ENCODE measurements at regions of chr12 and their contacts with region 1.

Region 1: GRCh38 chr12:6965026-6965661 is 5.3 kb downstream of the PHB2 start:
- DNase-seq: no peak
- ATAC-seq: peak; percentile 66
- H3K4me3 ChIP-seq: no peak overlapping the region
- H3K27ac ChIP-seq: peak overlapping the region; percentile 64
- H3K4me1 ChIP-seq: peaks cover 38% of the 10 kb centered on the region
- H3K27me3 ChIP-seq: no peaks in the 10 kb centered on the region
- CTCF ChIP-seq: peak; percentile 86 to 99 (median 96)
- EP300 ChIP-seq: 0 out of 4 replicates have a peak, but pooled peaks of 1 of the 2 experiments have one; percentile 11
- POLR2A ChIP-seq: peak; percentile 44; the same call in 1 of the 2 replicates
- RAD21 ChIP-seq: peak; percentile 88

Region 2: DNA sequence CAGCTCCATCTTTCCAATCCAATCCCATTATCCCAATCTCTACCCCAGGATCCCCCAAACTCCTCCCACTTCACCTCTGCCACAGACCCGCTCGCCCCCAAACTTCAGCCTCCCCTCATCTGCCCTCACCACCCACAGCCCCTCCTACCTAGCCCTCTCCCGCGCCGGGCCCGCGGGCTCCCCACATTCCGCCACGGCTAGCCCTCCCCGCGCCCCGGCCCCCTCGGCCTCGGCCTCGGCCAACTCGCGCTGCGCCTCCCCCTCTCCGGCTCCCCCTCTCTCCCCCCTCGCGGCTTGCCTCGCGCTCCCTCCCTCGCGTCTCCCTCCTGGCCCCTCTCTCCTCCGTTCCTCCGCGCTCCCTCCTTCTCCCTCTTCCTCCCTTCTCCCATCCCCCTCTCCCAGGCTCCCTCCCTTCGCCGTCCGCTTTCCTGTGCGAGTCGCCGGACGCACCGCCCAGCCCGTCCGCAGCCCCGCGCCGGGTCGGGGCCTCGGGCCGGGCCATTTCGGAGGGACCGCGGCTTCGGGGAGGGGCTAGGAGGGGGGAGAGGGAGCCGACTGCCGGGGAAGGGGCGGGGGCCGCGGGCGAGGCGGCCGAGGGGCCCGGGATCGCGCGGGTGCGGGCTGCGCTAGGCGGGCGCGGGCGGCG is 37.6 kb before region 1 on chr12 and contains the start of gene ATN1:
- CTCF ChIA-PET with region 1: interaction called, 21 read pairs
- POLR2A ChIA-PET with region 1: interaction called, 16 read pairs
- RAD21 ChIA-PET with region 1: interaction called, 19 read pairs
- SMC1A ChIA-PET with region 1: interaction called, 6 read pairs
- in situ Hi-C with region 1: no loop called
- intact Hi-C with region 1: no loop called
- DNase-seq: no peak
- ATAC-seq: peak; percentile 43
- H3K4me3 ChIP-seq: peak within 1 kb of the TSS; percentile 95
- H3K27ac ChIP-seq: peak within 1 kb of the TSS; percentile 86
- H3K4me1 ChIP-seq: peaks cover 37% of the 10 kb centered on the region
- H3K27me3 ChIP-seq: no peaks in the 10 kb centered on the region
- CTCF ChIP-seq: no peak
- EP300 ChIP-seq: no peak
- POLR2A ChIP-seq: peak; percentile 79
- RAD21 ChIP-seq: no peak
- polyA plus RNA-seq, gene ATN1: 0.08 to 0.15 TPM

Region 3: DNA sequence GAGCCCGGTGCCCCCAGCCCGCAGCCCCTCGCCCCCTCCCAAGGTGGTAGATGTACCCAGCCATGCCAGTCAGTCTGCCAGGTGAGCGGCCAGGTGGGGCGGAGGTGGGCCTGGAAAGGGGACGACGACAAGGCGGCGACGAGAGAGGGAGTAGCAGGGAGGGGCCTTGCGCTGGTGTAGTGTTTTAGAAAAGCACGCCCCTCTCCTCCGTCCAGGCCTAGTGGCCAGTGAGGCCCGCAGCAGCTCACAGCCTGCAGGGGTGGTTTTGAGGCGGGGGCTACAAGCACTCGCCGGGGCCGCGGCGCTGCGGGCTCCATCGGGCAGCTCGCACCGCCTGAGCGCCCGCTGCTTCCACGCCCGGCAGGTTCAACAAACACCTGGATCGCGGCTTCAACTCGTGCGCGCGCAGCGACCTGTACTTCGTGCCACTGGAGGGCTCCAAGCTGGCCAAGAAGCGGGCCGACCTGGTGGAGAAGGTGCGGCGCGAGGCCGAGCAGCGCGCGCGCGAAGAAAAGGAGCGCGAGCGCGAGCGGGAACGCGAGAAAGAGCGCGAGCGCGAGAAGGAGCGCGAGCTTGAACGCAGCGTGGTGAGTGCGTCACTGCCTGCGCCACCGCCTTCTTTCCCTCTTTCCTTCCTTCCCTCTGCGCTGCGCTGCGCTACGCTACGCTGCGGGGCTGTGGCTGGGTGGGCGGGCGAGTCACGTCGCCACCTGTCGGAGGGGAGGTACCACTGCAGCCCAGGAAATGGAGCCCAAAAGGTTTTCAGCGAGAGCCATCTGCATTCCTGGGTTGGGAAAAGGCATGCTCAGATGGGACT is 27.5 kb before region 1 on chr12:
- CTCF ChIA-PET with region 1: interaction called, 645 read pairs
- POLR2A ChIA-PET with region 1: interaction called, 524 read pairs
- RAD21 ChIA-PET with region 1: interaction called, 3 read pairs
- SMC1A ChIA-PET with region 1: interaction called, 395 read pairs
- in situ Hi-C with region 1: no loop called
- intact Hi-C with region 1: no loop called
- DNase-seq: peak; percentile 90
- ATAC-seq: peak; percentile 96
- H3K4me3 ChIP-seq: peak overlapping the region; percentile 86
- H3K27ac ChIP-seq: peak overlapping the region; percentile 92
- H3K4me1 ChIP-seq: peaks cover 11% of the 10 kb centered on the region; the same call in 1 of the 2 replicates
- H3K27me3 ChIP-seq: no peaks in the 10 kb centered on the region
- CTCF ChIP-seq: peak; percentile 96 to 99 (median 97)
- EP300 ChIP-seq: no peak
- POLR2A ChIP-seq: peak; percentile 87
- RAD21 ChIP-seq: peak; percentile 35

Region 4: GRCh38 chr12:6953442-6954315 is 11.5 kb before region 1 on chr12:
- CTCF ChIA-PET with region 1: interaction called, 645 read pairs
- POLR2A ChIA-PET with region 1: interaction called, 524 read pairs
- RAD21 ChIA-PET with region 1: interaction called, 426 read pairs
- SMC1A ChIA-PET with region 1: interaction called, 395 read pairs
- in situ Hi-C with region 1: no loop called
- intact Hi-C with region 1: loop called (anchors 1 kb)
- DNase-seq: peak; percentile 95
- ATAC-seq: peak; percentile 51
- H3K4me3 ChIP-seq: peak overlapping the region; percentile 95
- H3K27ac ChIP-seq: peak overlapping the region; percentile 99
- H3K4me1 ChIP-seq: peaks cover 76% of the 10 kb centered on the region
- H3K27me3 ChIP-seq: no peaks in the 10 kb centered on the region
- CTCF ChIP-seq: no peak
- EP300 ChIP-seq: peak; percentile 82 to 91
- POLR2A ChIP-seq: no peak
- RAD21 ChIP-seq: no peak

Region 5: DNA sequence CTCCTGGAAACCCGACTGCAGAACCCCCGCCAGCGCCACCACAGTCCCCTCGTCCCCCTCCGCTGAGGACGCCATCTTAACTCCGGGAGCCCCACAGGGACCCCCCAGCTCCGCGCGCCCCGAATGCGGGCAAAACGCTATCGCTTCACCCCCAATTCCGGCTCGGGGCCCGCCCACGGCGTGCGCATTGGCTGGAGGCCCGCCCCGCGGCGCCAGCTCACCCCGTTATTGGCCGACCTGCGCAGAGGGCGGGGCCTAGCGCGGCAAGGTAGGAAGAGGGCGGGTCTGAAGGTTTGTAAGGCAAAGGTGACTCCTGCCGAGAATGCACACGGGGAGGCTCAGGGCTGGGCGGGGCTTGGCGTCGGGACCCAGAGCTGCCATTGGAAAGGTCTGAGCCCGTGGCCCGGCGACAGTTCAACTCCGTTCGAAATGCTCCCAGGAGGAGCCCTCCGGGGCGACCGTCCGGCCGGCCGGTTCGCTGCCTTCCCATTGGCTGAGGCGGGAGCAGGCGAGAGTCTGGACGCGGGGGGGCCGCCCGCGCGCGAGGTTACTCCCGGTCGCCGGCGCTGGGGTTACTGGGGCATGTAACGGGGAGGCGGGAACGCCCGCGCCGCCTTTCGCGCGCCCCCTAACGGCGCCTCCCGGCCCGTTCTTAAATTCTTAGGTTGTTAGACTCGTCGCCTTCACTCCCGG is 53.4 kb after region 1 on chr12 and contains the start of gene LPCAT3:
- CTCF ChIA-PET with region 1: interaction called, 8 read pairs
- POLR2A ChIA-PET with region 1: interaction called, 3 read pairs
- RAD21 ChIA-PET with region 1: interaction called, 5 read pairs
- SMC1A ChIA-PET with region 1: interaction called, 5 read pairs
- in situ Hi-C with region 1: no loop called
- intact Hi-C with region 1: loop called (anchors 5 kb)
- DNase-seq: peak; percentile 83
- ATAC-seq: peak; percentile 97
- H3K4me3 ChIP-seq: peak within 1 kb of the TSS; percentile 91
- H3K27ac ChIP-seq: peak within 1 kb of the TSS; percentile 75
- H3K4me1 ChIP-seq: no peaks in the 10 kb centered on the region
- H3K27me3 ChIP-seq: no peaks in the 10 kb centered on the region
- CTCF ChIP-seq: peak; percentile 82 to 90 (median 83); a peak in 5 of 6 replicates
- EP300 ChIP-seq: no peak
- POLR2A ChIP-seq: peak; percentile 86
- RAD21 ChIP-seq: peak; percentile 41
- polyA plus RNA-seq, gene LPCAT3: 2.6 to 3.7 TPM

Region 6: GRCh38 chr12:7092229-7092985 is 127.3 kb after region 1 on chr12 and contains the start of gene C1R:
- CTCF ChIA-PET with region 1: interaction called, 4 read pairs
- POLR2A ChIA-PET with region 1: no interaction called
- RAD21 ChIA-PET with region 1: no interaction called
- SMC1A ChIA-PET with region 1: interaction called, 4 read pairs
- in situ Hi-C with region 1: no loop called
- intact Hi-C with region 1: loop called (anchors 5 kb)
- DNase-seq: no peak
- ATAC-seq: peak; percentile 90
- H3K4me3 ChIP-seq: peak within 1 kb of the TSS; percentile 72; the same call in 1 of the 2 replicates
- H3K27ac ChIP-seq: no peak within 1 kb of the TSS; the same call in 1 of the 2 replicates
- H3K4me1 ChIP-seq: no peaks in the 10 kb centered on the region
- H3K27me3 ChIP-seq: no peaks in the 10 kb centered on the region; a peak in 1 of 4 replicates
- CTCF ChIP-seq: peak; percentile 85 to 89 (median 88)
- EP300 ChIP-seq: no peak
- POLR2A ChIP-seq: no peak; the same call in 1 of the 2 replicates
- RAD21 ChIP-seq: peak; percentile 76
- polyA plus RNA-seq, gene C1R: 0.31 TPM in 1 of 2 experiments, not detected in the other

Region 7: DNA sequence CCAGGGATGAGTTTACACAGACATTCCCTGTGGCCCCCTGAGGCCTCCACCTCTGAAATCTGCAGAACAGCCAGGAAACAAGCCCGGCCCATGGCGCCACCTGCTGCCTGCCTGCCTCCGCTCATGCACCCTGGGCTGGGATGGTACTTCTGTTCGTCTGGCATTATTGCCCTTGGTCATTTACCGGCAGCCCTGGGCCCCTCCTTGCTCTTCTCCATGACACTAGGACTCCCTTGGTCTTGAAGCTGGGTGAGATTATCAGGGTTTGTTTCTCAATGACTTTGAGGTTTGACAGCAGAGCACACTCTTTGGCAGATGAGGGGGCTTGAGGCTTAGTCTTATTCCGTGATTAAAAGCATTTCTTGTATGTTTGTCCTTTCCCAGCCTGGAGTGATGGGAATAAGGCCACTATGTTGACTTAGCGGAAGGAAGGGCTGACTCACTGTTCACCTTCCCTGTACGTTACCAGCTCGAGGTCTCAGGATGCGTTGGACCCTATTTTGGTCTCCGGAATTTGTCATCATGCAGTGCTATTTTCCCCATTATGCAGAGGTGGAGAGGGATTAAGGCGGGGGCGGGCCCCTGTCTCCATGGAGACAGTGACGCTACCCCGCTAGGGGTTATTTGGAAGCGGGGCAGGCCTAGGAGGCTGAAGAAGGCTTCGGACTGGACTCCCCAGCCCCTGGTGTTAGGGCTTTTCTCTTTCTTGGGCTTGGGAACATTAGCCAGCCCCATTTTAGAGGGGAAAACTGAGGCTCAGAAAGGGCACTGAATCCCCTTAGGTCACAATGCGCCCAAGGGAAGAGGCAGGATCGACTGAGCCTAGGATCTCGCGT is 223.6 kb after region 1 on chr12:
- CTCF ChIA-PET with region 1: no interaction called
- POLR2A ChIA-PET with region 1: no interaction called
- RAD21 ChIA-PET with region 1: no interaction called
- SMC1A ChIA-PET with region 1: no interaction called
- in situ Hi-C with region 1: no loop called
- intact Hi-C with region 1: no loop called
- DNase-seq: peak; percentile 17
- ATAC-seq: peak; percentile 73
- H3K4me3 ChIP-seq: peak overlapping the region; percentile 74
- H3K27ac ChIP-seq: peak overlapping the region; percentile 59
- H3K4me1 ChIP-seq: 0 out of 2 replicates have a peak, but pooled peaks cover 3% of the 10 kb centered on the region
- H3K27me3 ChIP-seq: no peaks in the 10 kb centered on the region
- CTCF ChIP-seq: peak; percentile 71 to 78 (median 76)
- EP300 ChIP-seq: no peak
- POLR2A ChIP-seq: no peak
- RAD21 ChIP-seq: peak; percentile 58